ENCODE measurements at regions of chr3 and their contacts with region 1.

Region 1: GRCh38 chr3:155382396-155383042 is 89.0 kb upstream of the STRIT1 start:
- DNase-seq: peak; percentile 70

Region 2: DNA sequence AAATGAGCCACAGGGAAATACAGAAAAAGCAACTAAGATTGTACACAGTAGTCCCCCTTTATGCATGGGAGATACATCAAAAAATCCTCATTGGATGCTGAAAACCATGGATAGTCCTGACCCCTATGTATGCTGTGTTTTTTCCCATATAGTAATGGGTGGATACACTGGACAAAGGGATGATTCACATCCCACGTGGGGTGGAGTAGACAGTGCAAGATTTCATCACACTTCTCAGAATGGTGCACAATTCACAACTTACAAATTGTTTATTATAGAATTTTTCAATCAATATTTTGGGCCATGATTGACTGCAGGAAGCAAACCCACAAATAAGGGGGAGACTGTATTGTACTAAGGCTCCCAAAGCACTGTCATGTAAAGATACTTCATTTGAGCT is 135.4 kb after region 1 on chr3:
- in situ Hi-C with region 1: no loop called
- DNase-seq: no peak

Region 3: GRCh38 chr3:155701882-155702465 is 319.5 kb after region 1 on chr3:
- in situ Hi-C with region 1: loop called (anchors 25 kb)
- DNase-seq: peak; percentile 69